SK-N-SH (cell line): ENCODE measurements at regions of chr17 and their contacts with region 1.

Region 1: DNA sequence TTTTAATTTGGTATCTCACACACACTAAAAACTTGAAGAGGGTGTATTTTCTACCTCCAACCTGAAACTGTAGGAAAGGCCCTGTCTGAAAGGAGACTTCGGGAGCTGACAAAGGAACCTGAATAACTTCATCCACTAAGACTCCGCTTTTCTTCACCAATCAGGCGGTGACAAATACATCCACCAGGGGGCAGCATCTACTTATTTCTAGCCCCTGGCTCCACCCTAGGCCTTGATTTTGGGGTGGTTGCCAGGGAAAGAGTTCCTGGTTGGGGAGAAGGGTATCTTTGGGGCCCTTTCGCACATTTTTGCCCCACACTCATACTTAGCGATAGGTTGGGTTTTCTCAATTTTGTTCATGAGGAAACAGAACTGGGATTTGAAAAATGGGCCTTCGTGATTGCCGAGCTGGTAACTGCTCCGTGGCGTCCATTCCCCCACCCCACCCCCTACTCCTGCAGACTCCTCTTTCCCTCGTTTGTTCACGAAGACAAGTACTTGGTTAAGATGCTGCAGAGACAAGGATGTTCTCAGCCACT is 4.8 kb upstream of the ARL4D start:
- DNase-seq: peak; percentile 87
- H3K4me3 ChIP-seq: no peak overlapping the region; a peak in 1 of 4 replicates
- H3K27ac ChIP-seq: no peak overlapping the region
- H3K4me1 ChIP-seq: peaks cover 0 to 4% of the 10 kb centered on the region in 2 experiments; a peak in 1 of 4 replicates
- H3K27me3 ChIP-seq: no peaks in the 10 kb centered on the region
- CTCF ChIP-seq: peak; percentile 92
- EP300 ChIP-seq: no peak
- RAD21 ChIP-seq: peak; percentile 98

Region 2: DNA sequence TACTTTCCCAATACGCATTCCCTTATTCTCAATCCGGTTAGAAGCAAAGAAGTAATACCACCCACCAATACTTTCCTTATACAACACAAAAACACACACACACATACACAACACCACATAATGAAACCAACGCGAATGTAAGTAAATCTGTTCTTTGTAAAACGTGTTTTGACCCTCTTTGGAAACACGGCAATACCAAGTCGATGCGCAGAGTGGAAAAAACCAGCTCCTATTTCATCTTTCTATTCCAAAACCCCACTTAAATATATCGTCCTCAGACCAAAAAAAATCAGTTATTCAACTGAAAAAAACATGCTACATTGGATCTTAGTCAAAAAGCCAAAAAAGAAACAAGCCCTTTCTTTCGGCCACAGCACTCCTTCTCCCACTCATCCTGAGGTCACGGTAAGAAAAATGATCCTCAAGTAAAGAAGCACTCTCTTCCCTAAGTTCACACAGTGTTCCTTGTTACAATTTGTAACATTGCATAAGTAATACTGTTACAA is 26.2 kb before region 1 on chr17:
- CTCF ChIA-PET with region 1: interaction called, 27 read pairs
- POLR2A ChIA-PET with region 1: interaction called, 136 read pairs
- DNase-seq: peak; percentile 67
- H3K4me3 ChIP-seq: peak overlapping the region in 1 of 2 experiments; percentile 36; a peak in 2 of 4 replicates
- H3K27ac ChIP-seq: peak overlapping the region; percentile 92 to 95
- H3K4me1 ChIP-seq: peaks cover 7 to 11% of the 10 kb centered on the region in 2 experiments; a peak in 3 of 4 replicates
- H3K27me3 ChIP-seq: no peaks in the 10 kb centered on the region
- CTCF ChIP-seq: no peak
- EP300 ChIP-seq: peak; percentile 22 to 31; a peak in 1 of 4 replicates
- RAD21 ChIP-seq: no peak; the same call in 1 of the 2 replicates

Region 3: DNA sequence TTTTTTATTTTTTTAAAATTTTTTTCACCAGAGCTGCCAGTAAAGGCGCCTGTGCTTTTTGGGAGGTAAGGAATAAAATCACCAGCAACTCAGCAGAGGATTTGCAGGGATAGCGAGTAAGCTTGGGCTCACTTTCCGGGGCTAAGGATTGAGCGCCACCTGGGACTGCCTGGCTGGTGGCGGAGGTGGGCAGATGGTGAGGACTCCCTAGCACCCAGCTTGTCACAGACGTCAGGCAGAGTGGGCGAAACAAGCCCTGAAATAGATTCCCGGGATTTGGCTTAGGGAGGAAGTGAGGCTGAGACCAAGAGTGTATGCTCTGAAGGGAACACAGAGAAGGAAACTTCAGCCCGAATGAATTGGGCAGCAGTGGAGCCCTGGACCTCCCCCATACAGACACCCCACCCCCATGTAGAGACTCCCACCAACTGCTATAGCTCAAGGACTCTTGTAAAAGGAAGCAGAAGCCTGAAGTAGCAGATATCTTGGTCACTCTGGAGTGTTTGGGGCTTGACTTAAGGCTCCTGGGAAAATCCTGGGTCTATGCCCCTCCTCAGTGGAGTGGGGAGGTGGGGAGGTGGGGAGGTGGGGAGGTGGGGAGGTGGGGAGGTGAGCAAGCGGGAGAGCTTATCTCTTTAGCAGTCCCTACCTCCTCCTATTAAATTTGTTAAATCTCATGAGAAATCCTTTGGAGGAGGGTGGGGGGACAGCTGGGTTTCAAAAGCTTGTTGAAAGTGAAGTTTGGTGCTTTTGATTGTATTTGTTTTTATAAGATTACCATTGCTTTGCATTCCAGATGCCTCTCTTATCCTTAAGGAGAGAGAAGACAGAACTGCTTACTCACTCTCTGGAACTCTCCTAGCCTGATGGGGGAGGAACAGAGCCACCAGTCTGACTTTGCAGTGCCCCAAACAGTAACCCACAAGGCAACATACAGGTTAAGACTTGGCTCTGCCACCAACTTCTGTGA is 12.9 kb after region 1 on chr17:
- CTCF ChIA-PET with region 1: interaction called, 33 read pairs
- POLR2A ChIA-PET with region 1: interaction called, 4 read pairs
- DNase-seq: no peak
- H3K4me3 ChIP-seq: no peak overlapping the region
- H3K27ac ChIP-seq: peak overlapping the region; percentile 12 to 62; a peak in 3 of 4 replicates
- H3K4me1 ChIP-seq: peaks cover 11 to 14% of the 10 kb centered on the region in 2 experiments
- H3K27me3 ChIP-seq: no peaks in the 10 kb centered on the region
- CTCF ChIP-seq: no peak; the same call in 1 of the 2 replicates
- EP300 ChIP-seq: peak in 1 of 2 experiments; percentile 60; a peak in 1 of 4 replicates
- RAD21 ChIP-seq: no peak

Region 4: GRCh38 chr17:43428524-43428923 is 34.5 kb after region 1 on chr17:
- CTCF ChIA-PET with region 1: interaction called, 17 read pairs
- POLR2A ChIA-PET with region 1: no interaction called
- DNase-seq: no peak
- H3K4me3 ChIP-seq: no peak overlapping the region
- H3K27ac ChIP-seq: no peak overlapping the region
- H3K4me1 ChIP-seq: peaks cover 0 to 7% of the 10 kb centered on the region in 2 experiments; a peak in 1 of 4 replicates
- H3K27me3 ChIP-seq: no peaks in the 10 kb centered on the region
- CTCF ChIP-seq: peak; percentile 40
- EP300 ChIP-seq: no peak
- RAD21 ChIP-seq: peak; percentile 25; the same call in 1 of the 2 replicates

Region 5: GRCh38 chr17:43477832-43478634 is 84.0 kb after region 1 on chr17:
- CTCF ChIA-PET with region 1: interaction called, 430 read pairs
- POLR2A ChIA-PET with region 1: interaction called, 29 read pairs
- DNase-seq: no peak
- H3K4me3 ChIP-seq: no peak overlapping the region
- H3K27ac ChIP-seq: no peak overlapping the region
- H3K4me1 ChIP-seq: no peaks in the 10 kb centered on the region; a peak in 1 of 4 replicates
- H3K27me3 ChIP-seq: no peaks in the 10 kb centered on the region
- CTCF ChIP-seq: no peak
- EP300 ChIP-seq: no peak
- RAD21 ChIP-seq: no peak

Region 6: DNA sequence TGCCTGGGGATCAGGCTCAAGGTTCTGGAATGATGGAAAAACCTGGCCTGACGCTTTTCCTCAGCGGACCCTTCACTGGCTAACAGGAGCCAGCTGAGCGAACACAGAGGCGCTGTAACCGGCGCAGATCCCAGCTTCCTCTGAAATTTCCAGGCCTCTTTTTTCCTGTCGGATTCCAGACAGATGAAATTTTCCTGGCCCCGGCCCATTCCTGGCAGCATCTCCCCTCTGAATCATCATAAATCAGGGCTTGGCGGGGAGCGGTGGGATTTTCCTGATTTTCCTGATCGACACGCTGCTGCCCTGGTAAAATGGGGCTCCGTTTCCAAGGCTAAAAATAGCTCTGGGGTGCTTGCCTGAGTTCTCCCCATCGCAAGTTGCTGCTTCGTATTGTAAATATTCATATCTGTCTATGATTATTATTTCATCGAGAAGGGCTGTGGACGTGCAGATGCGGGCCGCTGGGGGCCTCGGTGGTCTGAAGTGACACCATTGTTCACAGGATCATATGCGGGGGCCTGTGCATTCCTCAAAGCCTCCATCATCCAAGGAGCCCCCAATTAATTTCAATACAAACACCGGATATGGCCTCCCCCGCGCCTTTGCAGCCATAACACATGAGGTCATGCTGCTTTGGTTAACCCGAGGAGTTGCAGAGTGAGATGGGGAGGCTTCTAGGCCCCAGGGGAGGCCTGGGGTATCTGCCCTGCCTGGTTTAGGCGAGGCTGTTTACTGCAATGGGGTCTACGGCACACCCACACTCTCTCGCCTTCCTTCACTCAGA is 198.0 kb after region 1 on chr17:
- CTCF ChIA-PET with region 1: no interaction called
- POLR2A ChIA-PET with region 1: no interaction called
- DNase-seq: peak; percentile 52
- H3K4me3 ChIP-seq: no peak overlapping the region
- H3K27ac ChIP-seq: peak overlapping the region; percentile 60 to 94
- H3K4me1 ChIP-seq: peaks cover 6 to 22% of the 10 kb centered on the region in 2 experiments; a peak in 3 of 4 replicates
- H3K27me3 ChIP-seq: no peaks in the 10 kb centered on the region
- CTCF ChIP-seq: no peak
- EP300 ChIP-seq: peak in 1 of 2 experiments; percentile 68; a peak in 2 of 4 replicates
- RAD21 ChIP-seq: no peak